ENCODE measurements at regions of chr5 and their contacts with region 1.

Region 1: GRCh38 chr5:15463231-15463980 is 36.6 kb upstream of the FBXL7 start:
- DNase-seq: peak; percentile 33
- ATAC-seq: peak; percentile 35; the same call in 1 of the 2 replicates
- H3K4me3 ChIP-seq: no peak overlapping the region
- H3K27ac ChIP-seq: no peak overlapping the region
- H3K4me1 ChIP-seq: no peaks in the 10 kb centered on the region
- H3K27me3 ChIP-seq: peaks cover 1% of the 10 kb centered on the region; the same call in 1 of the 2 replicates
- CTCF ChIP-seq: peak; percentile 72
- POLR2A ChIP-seq: no peak
- RAD21 ChIP-seq: peak; percentile 83

Region 2: GRCh38 chr5:15794052-15794985 is 330.9 kb after region 1 on chr5:
- CTCF ChIA-PET with region 1: no interaction called
- POLR2A ChIA-PET with region 1: no interaction called
- dilution Hi-C with region 1: no loop called
- in situ Hi-C with region 1: no loop called
- intact Hi-C with region 1: loop called (anchors 2 kb)
- DNase-seq: peak; percentile 24
- ATAC-seq: no peak
- H3K4me3 ChIP-seq: no peak overlapping the region
- H3K27ac ChIP-seq: no peak overlapping the region
- H3K4me1 ChIP-seq: peaks cover 3% of the 10 kb centered on the region
- H3K27me3 ChIP-seq: no peaks in the 10 kb centered on the region
- CTCF ChIP-seq: peak; percentile 44
- POLR2A ChIP-seq: no peak
- RAD21 ChIP-seq: peak; percentile 45